Endothelial cell of umbilical vein (primary cell): ENCODE measurements at regions of chr7 and their contacts with region 1.

Region 1: DNA sequence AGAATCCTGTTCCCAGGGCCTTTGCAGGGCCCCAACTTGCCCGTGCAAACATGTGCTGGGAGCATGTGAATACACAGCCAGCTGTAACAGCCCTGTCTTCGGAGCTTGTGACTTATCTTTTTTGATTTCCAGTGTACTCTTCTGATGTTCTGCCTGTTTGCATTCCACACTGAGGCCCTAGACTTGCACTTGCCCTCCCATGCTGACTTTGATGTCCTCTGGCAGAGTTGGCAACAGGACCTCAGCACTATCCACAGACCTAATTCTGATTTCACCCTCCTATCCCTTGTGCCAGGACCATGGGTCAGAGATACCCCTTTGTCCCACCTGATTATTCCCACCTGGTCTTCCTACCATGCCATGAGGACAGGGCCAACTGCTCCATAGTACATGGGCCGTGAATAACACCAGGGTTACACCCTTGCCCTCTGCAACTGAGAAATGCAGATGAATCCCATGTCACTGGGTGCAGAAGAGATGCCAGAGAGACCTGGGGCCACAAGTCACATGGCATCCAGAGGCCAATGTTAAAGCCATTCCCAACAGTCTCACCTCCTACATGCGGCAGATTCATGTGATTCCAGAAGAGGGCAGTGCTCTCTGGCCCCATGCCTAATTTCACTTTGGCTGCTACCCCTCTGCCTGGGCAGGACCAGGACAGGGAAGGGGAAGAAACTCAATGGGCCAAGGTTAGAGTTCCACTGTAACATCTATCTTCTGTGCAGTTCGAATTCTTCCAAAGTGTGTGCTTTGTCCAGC is 43.0 kb downstream of the SCRN1 start:
- DNase-seq: peak; percentile 40
- H3K4me3 ChIP-seq: no peak overlapping the region
- H3K27ac ChIP-seq: no peak overlapping the region
- H3K4me1 ChIP-seq: no peaks in the 10 kb centered on the region
- H3K27me3 ChIP-seq: no peaks in the 10 kb centered on the region
- CTCF ChIP-seq: peak; percentile 41 to 46
- POLR2A ChIP-seq: no peak

Region 2: GRCh38 chr7:28984631-28985030 is 962.0 kb before region 1 on chr7:
- CTCF ChIA-PET with region 1: no interaction called
- POLR2A ChIA-PET with region 1: no interaction called
- dilution Hi-C with region 1: no loop called
- intact Hi-C with region 1: no loop called
- DNase-seq: peak; percentile 24
- H3K4me3 ChIP-seq: no peak overlapping the region
- H3K27ac ChIP-seq: no peak overlapping the region
- H3K4me1 ChIP-seq: no peaks in the 10 kb centered on the region
- H3K27me3 ChIP-seq: peaks cover 2 to 3% of the 10 kb centered on the region in 2 experiments
- CTCF ChIP-seq: no peak
- POLR2A ChIP-seq: no peak

Region 3: GRCh38 chr7:29988424-29989256 is 42.0 kb after region 1 on chr7:
- CTCF ChIA-PET with region 1: no interaction called
- POLR2A ChIA-PET with region 1: no interaction called
- dilution Hi-C with region 1: no loop called
- intact Hi-C with region 1: loop called (anchors 2 kb)
- DNase-seq: peak; percentile 47
- H3K4me3 ChIP-seq: peak overlapping the region; percentile 65 to 88 (median 87)
- H3K27ac ChIP-seq: peak overlapping the region; percentile 93
- H3K4me1 ChIP-seq: peaks cover 22% of the 10 kb centered on the region
- H3K27me3 ChIP-seq: no peaks in the 10 kb centered on the region
- CTCF ChIP-seq: no peak
- POLR2A ChIP-seq: no peak

Region 4: GRCh38 chr7:30012757-30013156 is 66.2 kb after region 1 on chr7:
- CTCF ChIA-PET with region 1: no interaction called
- POLR2A ChIA-PET with region 1: no interaction called
- dilution Hi-C with region 1: no loop called
- intact Hi-C with region 1: no loop called
- DNase-seq: no peak
- H3K4me3 ChIP-seq: no peak overlapping the region
- H3K27ac ChIP-seq: no peak overlapping the region
- H3K4me1 ChIP-seq: no peaks in the 10 kb centered on the region
- H3K27me3 ChIP-seq: no peaks in the 10 kb centered on the region
- CTCF ChIP-seq: no peak
- POLR2A ChIP-seq: no peak